ENCODE measurements at regions of chr12 and their contacts with region 1.

Region 1: GRCh38 chr12:66087365-66087943 is 43.1 kb downstream of the LLPH start:
- DNase-seq: peak; percentile 70 to 74
- H3K4me3 ChIP-seq: no peak overlapping the region
- H3K27ac ChIP-seq: no peak overlapping the region
- H3K4me1 ChIP-seq: no peaks in the 10 kb centered on the region
- H3K27me3 ChIP-seq: no peaks in the 10 kb centered on the region
- CTCF ChIP-seq: peak; percentile 44 to 79 (median 70)
- POLR2A ChIP-seq: no peak

Region 2: DNA sequence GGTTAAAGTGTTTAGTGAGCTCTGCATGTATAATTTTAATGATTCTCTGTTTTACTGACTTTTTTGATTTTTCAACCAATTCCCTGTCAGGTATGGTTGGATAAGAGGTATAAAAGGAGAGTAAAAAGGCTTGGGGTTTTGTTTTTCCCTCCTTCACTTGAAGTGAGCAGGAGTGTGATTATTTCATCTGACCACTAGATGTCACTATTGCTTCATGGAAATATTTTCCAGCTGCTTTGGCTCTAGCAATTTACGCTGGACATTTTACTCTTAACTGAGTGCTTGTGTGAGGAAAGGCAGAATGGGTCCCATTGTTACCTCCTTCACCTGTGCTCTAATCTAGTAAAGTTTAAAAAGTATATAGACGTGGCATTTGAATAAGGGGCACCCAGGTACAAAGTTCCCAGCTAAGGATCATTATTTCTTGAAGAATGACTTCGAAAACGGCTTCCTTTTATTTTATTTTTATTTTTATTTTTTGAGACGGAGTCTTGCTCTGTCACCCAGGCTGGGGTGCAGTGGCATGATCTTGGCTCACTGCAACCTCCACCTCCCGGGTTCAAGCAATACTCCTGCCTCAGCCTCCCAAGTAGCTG is 1196.5 kb before region 1 on chr12:
- intact Hi-C with region 1: loop called (anchors 10 kb)
- DNase-seq: no peak
- H3K4me3 ChIP-seq: no peak overlapping the region
- H3K27ac ChIP-seq: no peak overlapping the region
- H3K4me1 ChIP-seq: no peaks in the 10 kb centered on the region
- H3K27me3 ChIP-seq: no peaks in the 10 kb centered on the region
- CTCF ChIP-seq: peak; percentile 41 to 92 (median 70)
- POLR2A ChIP-seq: no peak